Ascending aorta (tissue), 2 donors: ENCODE measurements at regions of chr12 and their contacts with region 1.

Region 1: GRCh38 chr12:69359531-69360347 is at the start of gene YEATS4:
- DNase-seq: peak; percentile 55 to 90
- H3K4me3 ChIP-seq: peak within 1 kb of the TSS; percentile 65 to 88
- H3K27ac ChIP-seq: peak within 1 kb of the TSS; percentile 95 to 97
- H3K4me1 ChIP-seq: no peaks in the 10 kb centered on the region
- H3K27me3 ChIP-seq: no peaks in the 10 kb centered on the region
- CTCF ChIP-seq: no peak
- total RNA-seq, gene YEATS4: 4.3 TPM

Region 2: GRCh38 chr12:69007101-69007854 is 352.5 kb before region 1 on chr12:
- intact Hi-C with region 1: no loop called
- DNase-seq: no peak
- H3K4me3 ChIP-seq: peak overlapping the region in 1 of 2 donors; percentile 38
- H3K27ac ChIP-seq: no peak overlapping the region
- H3K4me1 ChIP-seq: peaks cover 0 to 3% of the 10 kb centered on the region in 2 donors
- H3K27me3 ChIP-seq: no peaks in the 10 kb centered on the region
- CTCF ChIP-seq: no peak

Region 3: GRCh38 chr12:69239352-69239921 is 120.3 kb before region 1 on chr12 and contains the start of gene CPSF6:
- intact Hi-C with region 1: loop called (anchors 2 kb)
- DNase-seq: peak; percentile 71 to 96
- H3K4me3 ChIP-seq: peak within 1 kb of the TSS; percentile 92 to 93
- H3K27ac ChIP-seq: peak within 1 kb of the TSS; percentile 90 to 94
- H3K4me1 ChIP-seq: peaks cover 0 to 19% of the 10 kb centered on the region in 2 donors
- H3K27me3 ChIP-seq: no peaks in the 10 kb centered on the region
- CTCF ChIP-seq: no peak
- total RNA-seq, gene CPSF6: 29.2 TPM

Region 4: DNA sequence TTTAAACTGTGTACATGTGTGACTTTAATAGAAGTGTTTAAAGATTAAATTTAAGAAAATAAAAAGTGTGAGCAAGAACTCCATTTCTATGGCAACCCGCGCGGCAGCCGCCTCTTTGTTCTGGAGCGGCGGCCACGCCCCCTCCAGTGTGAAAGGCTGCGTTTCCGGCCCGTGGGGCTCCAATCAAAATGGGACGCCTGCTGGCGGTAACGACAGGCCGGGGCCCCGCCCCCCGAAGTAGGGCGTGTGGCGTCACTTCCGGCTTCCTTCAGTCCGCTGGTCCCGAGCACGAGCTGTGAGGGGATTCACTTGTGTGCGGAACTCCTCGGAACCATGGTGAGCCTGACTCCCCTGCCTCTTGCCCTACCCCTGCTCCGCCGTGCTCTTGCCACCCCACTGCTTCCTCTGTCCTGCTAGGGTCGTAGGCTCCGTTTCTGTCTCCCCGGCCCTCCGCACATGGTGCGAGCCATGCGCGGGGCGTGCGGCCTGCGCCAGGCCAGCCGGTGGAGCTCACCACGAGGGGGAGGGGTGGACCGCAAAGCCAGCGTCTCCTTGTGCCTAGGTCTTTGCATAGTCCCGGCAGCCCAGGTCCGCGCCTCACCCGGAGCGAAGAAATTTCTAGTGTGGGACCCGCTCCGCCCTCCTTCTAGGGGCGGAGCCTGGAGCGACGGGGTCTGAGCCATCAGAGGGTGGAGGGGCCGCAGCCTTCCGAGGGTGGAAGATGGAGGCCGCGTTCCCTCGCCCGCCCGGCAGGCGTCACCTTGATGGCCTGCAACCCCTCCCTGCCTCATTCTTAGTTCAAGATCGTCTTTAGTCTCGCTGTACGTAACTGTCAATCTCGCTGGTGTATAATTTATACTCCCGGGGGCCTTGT is 225.7 kb after region 1 on chr12 and contains the start of gene CCT2:
- intact Hi-C with region 1: loop called (anchors 1 kb)
- DNase-seq: peak; percentile 88 to 99
- H3K4me3 ChIP-seq: peak within 1 kb of the TSS; percentile 60 to 97
- H3K27ac ChIP-seq: peak within 1 kb of the TSS; percentile 79 to 86
- H3K4me1 ChIP-seq: peaks cover 6 to 8% of the 10 kb centered on the region in 2 donors
- H3K27me3 ChIP-seq: no peaks in the 10 kb centered on the region
- CTCF ChIP-seq: peak in 2 of 3 experiments; percentile 36 to 44
- total RNA-seq, gene CCT2: 65.0 TPM

Region 5: GRCh38 chr12:69639400-69640016 is 279.8 kb after region 1 on chr12:
- intact Hi-C with region 1: loop called (anchors 2 kb)
- DNase-seq: peak in 1 of 2 donors; percentile 65
- H3K4me3 ChIP-seq: no peak overlapping the region
- H3K27ac ChIP-seq: no peak overlapping the region
- H3K4me1 ChIP-seq: no peaks in the 10 kb centered on the region
- H3K27me3 ChIP-seq: no peaks in the 10 kb centered on the region
- CTCF ChIP-seq: peak; percentile 34 to 72 (median 65)

Region 6: DNA sequence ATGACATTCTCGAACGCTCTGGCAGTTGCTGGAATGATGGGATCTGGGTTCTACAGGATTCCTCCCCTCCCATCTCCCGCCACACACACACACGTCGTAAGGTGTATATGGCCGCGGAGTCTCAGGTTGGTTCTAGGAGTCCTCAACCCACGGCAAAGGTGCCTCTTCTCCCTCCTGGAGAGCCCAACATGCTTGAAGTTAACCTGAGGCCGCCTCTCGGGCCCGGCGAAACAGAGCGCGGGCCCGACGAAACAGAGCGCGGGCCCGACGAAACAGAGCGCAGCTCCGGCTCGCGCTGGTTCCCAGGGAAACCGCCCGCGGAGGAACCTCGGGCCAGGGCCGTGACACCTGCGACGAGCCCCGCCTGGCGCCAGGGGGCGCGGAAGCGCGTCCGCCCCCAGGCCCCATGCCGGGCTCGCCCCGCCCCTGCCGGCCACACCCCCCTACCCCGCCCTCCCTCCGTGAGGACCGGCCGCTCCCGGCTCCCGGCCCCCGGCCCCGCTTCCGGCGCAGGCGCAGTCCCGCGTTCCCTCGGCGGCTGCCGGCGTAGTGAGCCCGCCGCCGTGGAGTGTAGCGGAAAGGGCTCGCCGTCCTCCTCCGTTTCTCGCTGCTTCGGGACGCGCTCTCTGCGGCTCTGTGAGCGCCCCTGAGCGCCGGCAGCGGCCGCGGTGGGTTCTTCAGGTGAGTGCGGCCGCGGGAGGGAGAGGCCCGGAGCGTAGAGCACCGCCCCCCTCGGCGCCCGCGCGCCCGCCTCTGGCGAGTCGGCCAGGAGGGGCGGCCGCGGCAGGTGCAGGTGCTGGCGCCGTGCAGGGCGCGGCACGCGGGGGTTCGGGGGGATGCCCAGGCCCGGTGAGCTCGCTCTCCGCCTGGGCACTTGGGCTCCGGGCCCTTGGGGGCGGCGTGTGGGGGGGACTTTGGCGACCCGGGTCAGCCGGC is 378.9 kb after region 1 on chr12 and contains the start of gene RAB3IP:
- intact Hi-C with region 1: loop called (anchors 2 kb)
- DNase-seq: peak; percentile 35 to 87
- H3K4me3 ChIP-seq: peak within 1 kb of the TSS; percentile 92 to 95
- H3K27ac ChIP-seq: peak within 1 kb of the TSS; percentile 15 to 53
- H3K4me1 ChIP-seq: peaks cover 0 to 7% of the 10 kb centered on the region in 2 donors
- H3K27me3 ChIP-seq: no peaks in the 10 kb centered on the region
- CTCF ChIP-seq: peak; percentile 25 to 63 (median 51)
- total RNA-seq, gene RAB3IP: 17.2 TPM

Region 7: GRCh38 chr12:70576346-70577282 is 1216.9 kb after region 1 on chr12:
- intact Hi-C with region 1: loop called (anchors 5 kb)
- DNase-seq: no peak
- H3K4me3 ChIP-seq: no peak overlapping the region
- H3K27ac ChIP-seq: no peak overlapping the region
- H3K4me1 ChIP-seq: peaks cover 0 to 2% of the 10 kb centered on the region in 2 donors
- H3K27me3 ChIP-seq: no peaks in the 10 kb centered on the region
- CTCF ChIP-seq: peak; percentile 54 to 77 (median 70)